Prostate gland (tissue), 2 donors: ENCODE measurements at regions of chr3 and their contacts with region 1.

Region 1: GRCh38 chr3:46442576-46443562 is 21.8 kb downstream of the LTF start:
- DNase-seq: no peak
- H3K4me3 ChIP-seq: no peak overlapping the region
- H3K27ac ChIP-seq: no peak overlapping the region
- H3K4me1 ChIP-seq: no peaks in the 10 kb centered on the region
- H3K27me3 ChIP-seq: no peaks in the 10 kb centered on the region
- CTCF ChIP-seq: peak in 2 of 4 experiments; percentile 55 to 78
- POLR2A ChIP-seq: no peak

Region 2: DNA sequence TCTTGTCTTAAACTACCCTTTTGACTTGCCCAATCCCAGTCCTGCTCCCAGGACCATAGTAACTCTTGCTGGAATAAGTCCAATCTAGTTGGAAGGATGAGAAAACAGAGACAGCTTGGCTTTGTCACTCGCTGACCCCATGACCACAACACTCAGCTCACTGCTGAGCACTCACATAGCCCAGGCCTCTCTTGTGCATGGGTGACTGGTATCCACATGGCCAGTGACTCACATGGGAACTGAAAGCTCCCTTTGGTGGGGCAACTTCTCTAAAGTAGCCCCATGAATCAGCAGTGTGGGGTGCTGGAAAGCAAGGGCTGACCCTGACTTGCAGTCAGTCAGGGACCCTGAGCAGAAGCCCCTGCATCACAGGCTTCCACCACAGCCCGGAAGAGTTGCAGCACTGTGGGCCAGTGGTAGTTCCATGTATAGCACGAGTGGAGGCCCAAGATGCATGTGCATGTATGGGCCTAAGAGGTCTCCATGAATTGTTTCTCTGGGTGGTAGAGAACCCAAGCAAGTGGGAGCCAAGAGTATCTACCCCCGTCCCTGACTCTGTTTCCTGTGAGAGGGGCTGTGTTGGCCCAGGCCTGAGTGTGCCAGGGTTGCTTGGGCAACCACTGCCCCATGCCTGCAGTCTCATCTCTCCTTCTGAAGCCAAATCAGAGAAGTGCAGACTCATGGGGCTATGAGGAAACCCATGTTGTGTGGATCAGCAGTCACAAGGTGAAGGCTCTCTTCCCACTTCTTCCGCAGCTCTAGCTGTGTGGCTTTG is 353.4 kb before region 1 on chr3:
- intact Hi-C with region 1: loop called (anchors 5 kb)
- DNase-seq: no peak
- H3K4me3 ChIP-seq: no peak overlapping the region
- H3K27ac ChIP-seq: no peak overlapping the region
- H3K4me1 ChIP-seq: no peaks in the 10 kb centered on the region
- H3K27me3 ChIP-seq: no peaks in the 10 kb centered on the region
- CTCF ChIP-seq: no peak
- POLR2A ChIP-seq: no peak

Region 3: DNA sequence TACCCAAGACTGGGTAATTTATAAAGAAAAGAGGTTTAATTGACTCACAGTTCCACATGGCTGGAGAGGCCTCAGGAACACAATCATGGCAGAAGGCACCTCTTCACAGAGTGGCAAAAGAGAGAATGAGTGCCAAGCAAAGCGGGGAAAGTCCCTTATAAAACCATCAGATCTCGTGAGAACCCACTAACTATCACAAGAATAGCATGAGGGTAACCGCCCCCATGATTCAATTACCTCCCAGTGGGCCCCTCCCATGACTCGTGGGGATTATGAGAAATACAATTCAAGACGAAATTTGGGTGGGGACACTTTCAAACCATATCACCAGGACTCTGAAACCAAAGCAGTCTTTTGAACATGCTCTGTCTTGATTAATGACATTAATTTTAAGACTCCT is 61.9 kb after region 1 on chr3:
- intact Hi-C with region 1: no loop called
- DNase-seq: no peak
- H3K4me3 ChIP-seq: no peak overlapping the region
- H3K27ac ChIP-seq: no peak overlapping the region
- H3K4me1 ChIP-seq: no peaks in the 10 kb centered on the region
- H3K27me3 ChIP-seq: no peaks in the 10 kb centered on the region
- CTCF ChIP-seq: no peak
- POLR2A ChIP-seq: no peak